Lower leg skin (tissue), 4 donors: ENCODE measurements at regions of chr14 and their contacts with region 1.

Region 1: GRCh38 chr14:105537369-105538164 is 11.2 kb downstream of the TMEM121 start:
- DNase-seq: no peak
- H3K4me3 ChIP-seq: no peak overlapping the region
- CTCF ChIP-seq: peak in 1 of 3 donors; percentile 58
- POLR2A ChIP-seq: no peak

Region 2: GRCh38 chr14:104331871-104332605 is 1205.5 kb before region 1 on chr14:
- intact Hi-C with region 1: no loop called
- DNase-seq: peak in 1 of 2 donors; percentile 76
- H3K4me3 ChIP-seq: no peak overlapping the region
- CTCF ChIP-seq: no peak
- POLR2A ChIP-seq: no peak

Region 3: GRCh38 chr14:105197271-105197670 is 340.3 kb before region 1 on chr14:
- intact Hi-C with region 1: loop called (anchors 10 kb)
- DNase-seq: no peak
- H3K4me3 ChIP-seq: no peak overlapping the region
- CTCF ChIP-seq: no peak
- POLR2A ChIP-seq: no peak

Region 4: DNA sequence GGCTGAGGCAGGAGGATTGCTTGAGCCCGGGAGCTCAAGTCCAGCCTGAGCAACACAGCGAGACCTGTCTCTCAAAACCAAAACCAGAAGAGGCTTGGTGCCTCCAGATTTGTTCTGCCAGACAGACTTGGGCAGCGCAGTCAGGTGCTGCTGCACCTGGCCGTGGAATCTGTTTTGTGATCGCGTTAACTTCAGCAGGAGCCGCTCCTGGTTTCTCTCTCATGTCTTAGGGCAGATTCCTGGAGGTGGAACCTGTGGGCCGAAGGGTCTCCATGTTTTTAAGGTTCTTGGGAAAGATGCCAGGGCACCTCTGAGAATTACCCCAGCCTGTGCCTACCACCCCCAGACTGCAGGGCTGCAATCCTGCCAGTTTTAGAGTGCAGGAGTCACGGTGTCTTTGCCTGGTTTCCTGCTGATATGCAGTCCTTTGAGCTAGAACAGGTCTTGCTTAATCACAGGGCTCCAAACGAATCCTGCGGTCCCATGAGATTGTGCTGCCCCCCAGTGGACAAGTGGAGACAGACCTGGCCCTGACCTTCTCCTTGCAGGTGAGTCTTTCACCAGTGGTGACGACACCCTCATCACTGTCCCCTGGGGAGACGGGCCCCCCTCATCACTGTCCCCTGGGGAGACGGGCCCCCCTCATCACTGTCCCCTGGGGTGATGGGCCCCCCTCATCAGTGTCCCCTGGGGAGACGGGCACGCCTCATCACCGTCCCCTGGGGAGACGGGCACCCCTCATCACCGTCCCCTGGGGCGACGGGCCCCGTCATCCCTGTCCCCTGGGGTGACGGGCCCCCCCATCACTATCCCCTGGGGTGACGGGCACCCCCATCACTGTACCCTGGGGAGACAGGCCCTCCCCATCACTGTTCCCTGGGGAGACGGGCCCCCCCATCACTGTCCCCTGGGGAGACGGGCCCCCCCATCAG is 185.4 kb before region 1 on chr14:
- intact Hi-C with region 1: no loop called
- DNase-seq: peak; percentile 85 to 96
- H3K4me3 ChIP-seq: no peak overlapping the region
- CTCF ChIP-seq: peak in 1 of 3 donors; percentile 76
- POLR2A ChIP-seq: no peak

Region 5: GRCh38 chr14:105682940-105683570 is 145.5 kb after region 1 on chr14:
- intact Hi-C with region 1: no loop called
- DNase-seq: peak in 1 of 2 donors; percentile 40
- H3K4me3 ChIP-seq: no peak overlapping the region
- CTCF ChIP-seq: no peak
- POLR2A ChIP-seq: no peak